Left lung (tissue), 14 donors: ENCODE measurements at regions of chr15 and their contacts with region 1.

Region 1: GRCh38 chr15:92077353-92078085 is 224.0 kb downstream of the SLCO3A1 start:
- DNase-seq: peak in 3 of 4 donors; percentile 55 to 77 (median 74)
- ATAC-seq: peak; percentile 63
- H3K4me3 ChIP-seq: no peak overlapping the region
- H3K27ac ChIP-seq: no peak overlapping the region
- H3K4me1 ChIP-seq: peaks cover 22 to 51% of the 10 kb centered on the region in 2 donors
- H3K27me3 ChIP-seq: no peaks in the 10 kb centered on the region
- CTCF ChIP-seq: peak; percentile 67 to 71

Region 2: GRCh38 chr15:91302588-91303439 is 774.7 kb before region 1 on chr15:
- intact Hi-C with region 1: loop called in 1 of 2 experiments (anchors 5 kb)
- DNase-seq: peak in 2 of 4 donors; percentile 56 to 75
- ATAC-seq: peak; percentile 97
- H3K4me3 ChIP-seq: no peak overlapping the region
- H3K27ac ChIP-seq: no peak overlapping the region
- H3K4me1 ChIP-seq: peaks cover 0 to 5% of the 10 kb centered on the region in 2 donors
- H3K27me3 ChIP-seq: peaks cover 10 to 40% of the 10 kb centered on the region in 2 donors
- CTCF ChIP-seq: peak; percentile 66 to 67

Region 3: DNA sequence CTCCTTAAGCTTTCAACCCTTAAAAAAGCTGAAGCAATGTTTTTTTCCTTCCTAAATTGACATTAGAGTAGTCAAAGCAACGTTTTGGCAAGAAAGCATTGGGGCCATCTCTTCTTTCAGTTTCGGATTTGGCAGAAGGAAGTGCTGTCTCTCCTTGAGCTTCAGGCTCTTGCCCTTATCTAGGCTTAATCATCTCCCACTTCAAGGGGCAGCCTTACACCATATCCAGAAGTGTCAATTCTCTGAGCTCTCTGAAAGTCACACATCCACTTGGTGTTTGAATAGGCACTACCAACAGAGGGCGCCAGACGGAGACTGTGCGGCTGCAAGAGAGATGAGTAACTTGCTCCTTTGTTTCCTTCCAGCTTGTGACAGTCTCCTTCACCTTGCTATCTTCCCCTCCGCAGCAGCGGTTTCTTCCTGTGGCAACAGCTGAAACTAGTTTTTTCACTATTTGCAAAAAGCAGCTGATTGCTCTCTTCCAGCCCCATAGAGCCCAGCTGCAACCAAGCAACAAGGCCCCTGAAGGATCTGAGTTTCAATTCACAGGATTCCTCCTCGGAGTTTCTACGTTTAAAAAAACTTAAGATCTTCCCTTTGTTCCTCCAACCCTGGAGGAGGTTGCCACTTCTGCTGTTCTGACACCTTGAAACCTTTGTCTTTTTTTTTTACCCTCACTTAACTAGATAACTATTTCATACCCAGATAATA is 371.0 kb before region 1 on chr15:
- intact Hi-C with region 1: loop called in 1 of 2 experiments (anchors 10 kb)
- DNase-seq: peak; percentile 69 to 82 (median 80)
- ATAC-seq: peak; percentile 96
- H3K4me3 ChIP-seq: no peak overlapping the region
- H3K27ac ChIP-seq: peak overlapping the region; percentile 35 to 37
- H3K4me1 ChIP-seq: peaks cover 0 to 7% of the 10 kb centered on the region in 2 donors
- H3K27me3 ChIP-seq: no peaks in the 10 kb centered on the region
- CTCF ChIP-seq: peak; percentile 78 to 92

Region 4: DNA sequence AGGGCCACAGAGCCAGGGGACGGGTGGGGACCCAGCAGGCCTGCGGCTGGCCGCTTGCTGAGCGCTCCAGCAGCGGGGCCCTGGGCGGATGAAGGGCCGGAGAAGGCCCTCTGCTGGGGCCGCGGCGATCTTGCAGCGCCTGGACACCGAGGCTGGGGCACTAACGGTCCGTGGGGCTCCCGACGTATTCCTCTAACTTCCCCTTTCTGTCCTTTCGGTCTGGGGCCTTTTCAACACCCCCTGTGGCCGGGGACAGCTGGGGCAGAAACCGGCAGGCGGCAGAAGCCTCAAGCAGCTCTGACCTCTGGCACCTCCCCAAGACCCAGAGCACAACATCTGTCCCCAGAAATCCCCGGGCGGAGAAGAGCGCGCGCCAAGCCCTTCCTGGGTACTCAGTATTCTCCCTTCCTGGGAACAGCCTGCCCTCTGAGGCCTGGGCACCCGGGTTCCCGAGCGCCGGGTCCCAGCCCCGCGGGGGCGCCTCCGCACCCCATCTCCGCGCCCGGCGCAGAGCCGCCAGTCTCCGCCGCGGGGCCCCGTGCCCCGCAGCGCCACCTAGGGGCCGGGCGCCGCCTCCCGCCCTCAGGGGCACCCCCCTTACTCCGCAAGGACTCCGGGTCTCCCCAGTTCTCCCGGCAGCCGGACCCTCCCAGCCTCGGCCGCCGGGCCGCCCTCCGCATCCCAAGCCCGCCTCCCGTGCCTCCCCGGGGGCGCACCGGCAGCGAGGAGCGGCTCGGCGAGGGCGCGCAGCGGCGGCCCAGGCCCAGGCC is 224.6 kb before region 1 on chr15:
- intact Hi-C with region 1: loop called in 1 of 2 experiments (anchors 5 kb)
- DNase-seq: peak; percentile 61 to 98 (median 82)
- ATAC-seq: peak; percentile 83
- H3K4me3 ChIP-seq: peak overlapping the region; percentile 66 to 81
- H3K27ac ChIP-seq: peak overlapping the region; percentile 91 to 98
- H3K4me1 ChIP-seq: peaks cover 35 to 52% of the 10 kb centered on the region in 2 donors
- H3K27me3 ChIP-seq: no peaks in the 10 kb centered on the region
- CTCF ChIP-seq: peak; percentile 70 to 84

Region 5: GRCh38 chr15:91942676-91943576 is 134.6 kb before region 1 on chr15:
- intact Hi-C with region 1: loop called in 1 of 2 experiments (anchors 10 kb)
- DNase-seq: peak; percentile 82 to 96 (median 89)
- ATAC-seq: peak; percentile 70
- H3K4me3 ChIP-seq: peak overlapping the region in 1 of 2 donors; percentile 6
- H3K27ac ChIP-seq: peak overlapping the region; percentile 90 to 93
- H3K4me1 ChIP-seq: peaks cover 66 to 97% of the 10 kb centered on the region in 2 donors
- H3K27me3 ChIP-seq: no peaks in the 10 kb centered on the region
- CTCF ChIP-seq: no peak